WTC11 (cell line): ENCODE measurements at regions of chr14 and their contacts with region 1.

Region 1: DNA sequence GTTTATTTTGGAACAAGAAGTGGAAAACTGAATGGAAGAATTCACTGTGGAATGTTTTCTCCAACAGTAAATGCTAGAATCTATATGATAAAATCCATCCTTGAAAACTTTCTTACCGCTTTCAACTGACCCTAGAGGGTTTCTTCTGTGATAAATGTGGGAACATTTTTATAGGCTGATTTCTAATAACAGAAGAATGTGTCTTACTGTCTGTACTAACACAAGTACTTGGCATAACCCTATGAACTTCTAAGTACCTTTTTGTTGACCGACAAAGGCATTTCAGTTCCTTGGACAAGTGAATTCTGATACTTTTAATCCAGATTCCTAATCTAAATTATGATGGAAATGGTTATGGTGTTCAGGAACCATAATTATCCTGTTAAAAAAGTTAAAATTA is 1109.7 kb upstream of the FLRT2 start:
- DNase-seq: no peak
- ATAC-seq: no peak
- H3K4me3 Mint-ChIP-seq: no peak overlapping the region
- H3K27ac Mint-ChIP-seq: no peak overlapping the region
- H3K4me1 Mint-ChIP-seq: peaks cover 8% of the 10 kb centered on the region
- H3K27me3 Mint-ChIP-seq: no peaks in the 10 kb centered on the region
- CTCF ChIP-seq: no peak

Region 2: DNA sequence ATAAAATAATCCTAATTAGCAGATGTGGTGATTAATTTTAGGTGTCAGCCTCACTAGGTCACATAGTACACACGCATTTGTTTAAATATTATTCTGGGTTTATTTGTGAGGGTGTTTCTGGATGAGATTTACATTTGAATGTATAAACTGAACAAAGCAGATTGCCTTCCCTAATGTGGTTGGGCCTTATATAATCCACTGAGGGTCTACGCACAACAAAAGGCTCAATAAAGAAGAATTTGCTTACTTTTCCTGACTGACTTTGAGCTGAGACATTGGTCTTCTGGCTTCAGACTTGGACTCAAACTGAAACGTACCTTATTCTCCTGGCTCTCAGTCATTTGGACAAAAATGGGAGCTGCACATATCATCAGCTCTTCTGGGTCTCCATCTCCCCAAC is 22.6 kb before region 1 on chr14:
- CTCF ChIA-PET with region 1: no interaction called
- POLR2A ChIA-PET with region 1: interaction called, 14 read pairs
- DNase-seq: no peak
- ATAC-seq: no peak
- H3K4me3 Mint-ChIP-seq: no peak overlapping the region
- H3K27ac Mint-ChIP-seq: no peak overlapping the region
- H3K4me1 Mint-ChIP-seq: peaks cover 9% of the 10 kb centered on the region
- H3K27me3 Mint-ChIP-seq: no peaks in the 10 kb centered on the region
- CTCF ChIP-seq: no peak

Region 3: GRCh38 chr14:84432676-84433075 is 12.5 kb after region 1 on chr14:
- CTCF ChIA-PET with region 1: no interaction called
- POLR2A ChIA-PET with region 1: no interaction called
- DNase-seq: no peak
- ATAC-seq: no peak
- H3K4me3 Mint-ChIP-seq: no peak overlapping the region
- H3K27ac Mint-ChIP-seq: no peak overlapping the region
- H3K4me1 Mint-ChIP-seq: peaks cover 23% of the 10 kb centered on the region
- H3K27me3 Mint-ChIP-seq: no peaks in the 10 kb centered on the region
- CTCF ChIP-seq: no peak

Region 4: GRCh38 chr14:84544486-84545131 is 124.4 kb after region 1 on chr14:
- CTCF ChIA-PET with region 1: no interaction called
- POLR2A ChIA-PET with region 1: no interaction called
- DNase-seq: no peak
- ATAC-seq: peak; percentile 28; the same call in 1 of the 2 replicates
- H3K4me3 Mint-ChIP-seq: no peak overlapping the region
- H3K27ac Mint-ChIP-seq: no peak overlapping the region; the same call in 1 of the 2 replicates
- H3K4me1 Mint-ChIP-seq: peaks cover 42% of the 10 kb centered on the region
- H3K27me3 Mint-ChIP-seq: no peaks in the 10 kb centered on the region
- CTCF ChIP-seq: no peak